ENCODE measurements at regions of chr2 and their contacts with region 1.

Region 1: DNA sequence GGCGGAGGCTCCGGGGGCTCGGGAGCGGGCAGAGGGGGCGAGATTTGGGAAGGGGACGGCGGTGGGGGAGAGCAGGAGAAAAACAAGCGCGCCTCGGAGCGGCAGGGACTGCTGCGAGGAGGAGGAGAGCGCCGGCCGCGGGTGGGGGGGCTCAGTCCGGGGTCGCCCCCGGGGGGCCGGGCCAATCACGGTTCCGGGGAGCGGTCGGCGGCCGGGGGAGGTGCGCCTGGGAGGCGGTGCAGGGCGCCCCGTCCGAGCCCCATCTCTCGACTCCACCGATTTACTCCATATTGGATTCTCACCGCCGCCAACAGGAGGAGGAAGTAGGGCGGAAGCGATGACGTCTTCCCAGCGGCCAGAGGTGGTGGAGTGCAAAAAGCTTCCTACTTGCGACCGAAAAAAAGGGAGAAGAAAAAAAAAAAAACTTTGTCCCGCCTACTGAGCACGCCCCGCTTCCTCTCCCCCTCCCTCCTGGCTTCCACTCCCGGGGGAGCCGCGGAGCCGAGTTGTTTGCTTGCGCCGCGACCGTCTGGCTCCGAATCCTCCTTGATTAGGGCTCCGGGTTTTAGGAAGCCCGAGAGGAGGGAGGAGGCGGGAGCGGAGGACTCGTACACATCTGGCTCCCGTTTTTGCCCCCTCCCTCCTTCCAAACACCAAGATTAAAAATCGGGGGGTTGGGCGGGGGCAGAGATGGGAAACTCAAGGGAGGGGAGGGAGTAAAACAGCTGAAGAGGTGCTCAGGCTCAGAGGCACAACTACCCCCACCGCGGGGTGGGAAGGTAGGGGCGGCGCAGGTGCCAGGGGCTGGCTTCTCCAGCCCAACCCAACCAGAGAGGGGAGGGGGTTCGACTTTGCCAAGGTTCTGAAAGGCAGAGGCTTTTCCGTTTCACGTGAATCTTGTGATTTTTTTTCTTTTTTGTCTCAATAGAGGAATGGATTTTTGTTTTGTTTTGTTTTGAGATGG is at the start of gene SPRED2:
- DNase-seq: peak; percentile 62
- ATAC-seq: peak; percentile 30
- H3K4me3 Mint-ChIP-seq: peak within 1 kb of the TSS; percentile 90
- H3K27ac Mint-ChIP-seq: peak within 1 kb of the TSS; percentile 69
- H3K4me1 Mint-ChIP-seq: peaks cover 23% of the 10 kb centered on the region
- H3K27me3 Mint-ChIP-seq: peaks cover 19% of the 10 kb centered on the region
- CTCF ChIP-seq: no peak
- total RNA-seq, gene SPRED2: 2.5 and 3.1 TPM in 2 replicates

Region 2: DNA sequence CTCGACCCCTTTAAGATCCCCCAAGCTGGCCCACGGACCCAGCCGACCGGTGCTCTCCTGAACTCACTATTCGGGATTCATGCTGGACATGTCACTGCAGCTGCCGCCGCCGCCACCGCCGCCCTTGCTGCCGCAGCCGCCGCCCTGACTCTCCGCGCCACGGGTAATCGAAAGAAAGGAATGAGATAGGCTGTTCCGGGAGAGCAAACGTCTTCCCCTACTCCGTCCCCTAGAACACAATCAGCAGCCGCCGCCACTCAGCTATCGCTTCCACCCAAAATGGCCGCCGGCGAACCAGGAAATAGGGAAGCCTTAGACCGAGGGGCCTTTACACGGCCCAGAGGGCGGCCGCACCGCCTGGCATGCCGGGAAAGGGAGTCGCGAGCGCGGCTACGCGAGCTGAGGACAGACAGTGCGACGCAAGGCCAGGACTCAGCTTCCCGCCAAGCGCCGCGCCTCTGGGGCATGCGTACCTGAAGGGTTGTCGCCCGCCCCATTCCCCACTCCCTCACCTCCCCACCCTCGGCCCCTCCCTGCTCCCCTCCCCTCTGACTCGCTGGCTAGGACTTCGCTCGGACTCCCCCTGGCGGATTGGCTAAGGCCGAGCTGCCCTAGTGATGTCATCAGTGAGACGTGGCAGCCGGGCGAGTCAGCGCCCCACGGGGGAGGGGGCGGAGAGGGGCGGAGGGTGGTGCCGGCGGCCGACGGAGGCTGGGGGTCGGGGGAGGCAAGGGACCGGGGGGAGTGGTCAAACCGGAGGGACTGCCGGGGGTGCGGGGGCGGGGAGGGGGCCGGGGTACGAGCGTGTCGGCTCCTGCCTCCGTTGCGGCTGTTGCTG is 302.5 kb before region 1 on chr2 and contains the start of gene RAB1A:
- CTCF ChIA-PET with region 1: no interaction called
- POLR2A ChIA-PET with region 1: interaction called, 5 read pairs
- intact Hi-C with region 1: loop called (anchors 5 kb)
- DNase-seq: peak; percentile 91
- ATAC-seq: peak; percentile 93
- H3K4me3 Mint-ChIP-seq: peak within 1 kb of the TSS; percentile 100
- H3K27ac Mint-ChIP-seq: peak within 1 kb of the TSS; percentile 100
- H3K4me1 Mint-ChIP-seq: peaks cover 49% of the 10 kb centered on the region
- H3K27me3 Mint-ChIP-seq: no peaks in the 10 kb centered on the region
- CTCF ChIP-seq: no peak
- total RNA-seq, gene RAB1A: 45.0 and 46.4 TPM in 2 replicates

Region 3: GRCh38 chr2:65264821-65265670 is 167.5 kb before region 1 on chr2:
- CTCF ChIA-PET with region 1: interaction called, 4 read pairs
- POLR2A ChIA-PET with region 1: no interaction called
- intact Hi-C with region 1: loop called (anchors 2 kb)
- DNase-seq: no peak
- ATAC-seq: peak; percentile 25
- H3K4me3 Mint-ChIP-seq: no peak overlapping the region
- H3K27ac Mint-ChIP-seq: peak overlapping the region; percentile 12
- H3K4me1 Mint-ChIP-seq: peaks cover 8% of the 10 kb centered on the region
- H3K27me3 Mint-ChIP-seq: no peaks in the 10 kb centered on the region
- CTCF ChIP-seq: no peak

Region 4: DNA sequence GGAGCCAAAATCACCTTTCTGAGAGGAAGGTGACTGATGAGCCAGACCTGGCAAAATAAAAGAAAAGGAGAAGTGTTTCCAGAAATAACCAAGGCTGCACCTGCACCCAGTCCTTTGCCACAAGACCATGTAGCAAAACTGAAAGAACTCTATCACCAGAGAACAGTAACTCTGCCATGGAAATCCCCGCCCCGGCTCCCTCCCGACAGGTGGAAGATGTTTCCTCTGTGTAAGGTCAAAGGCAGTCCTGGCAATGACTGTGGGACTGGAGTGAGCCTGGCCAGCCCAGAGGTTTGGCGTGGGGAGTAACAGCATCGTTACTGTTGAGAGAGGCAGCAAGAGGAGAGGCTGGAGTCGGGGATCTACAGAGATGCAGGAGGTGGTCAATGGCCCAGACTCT is 42.4 kb before region 1 on chr2:
- CTCF ChIA-PET with region 1: no interaction called
- POLR2A ChIA-PET with region 1: interaction called, 5 read pairs
- intact Hi-C with region 1: loop called (anchors 1 kb)
- DNase-seq: peak; percentile 42
- ATAC-seq: peak; percentile 71
- H3K4me3 Mint-ChIP-seq: peak overlapping the region; percentile 73
- H3K27ac Mint-ChIP-seq: peak overlapping the region; percentile 80
- H3K4me1 Mint-ChIP-seq: peaks cover 57% of the 10 kb centered on the region
- H3K27me3 Mint-ChIP-seq: peaks cover 10% of the 10 kb centered on the region
- CTCF ChIP-seq: no peak

Region 5: DNA sequence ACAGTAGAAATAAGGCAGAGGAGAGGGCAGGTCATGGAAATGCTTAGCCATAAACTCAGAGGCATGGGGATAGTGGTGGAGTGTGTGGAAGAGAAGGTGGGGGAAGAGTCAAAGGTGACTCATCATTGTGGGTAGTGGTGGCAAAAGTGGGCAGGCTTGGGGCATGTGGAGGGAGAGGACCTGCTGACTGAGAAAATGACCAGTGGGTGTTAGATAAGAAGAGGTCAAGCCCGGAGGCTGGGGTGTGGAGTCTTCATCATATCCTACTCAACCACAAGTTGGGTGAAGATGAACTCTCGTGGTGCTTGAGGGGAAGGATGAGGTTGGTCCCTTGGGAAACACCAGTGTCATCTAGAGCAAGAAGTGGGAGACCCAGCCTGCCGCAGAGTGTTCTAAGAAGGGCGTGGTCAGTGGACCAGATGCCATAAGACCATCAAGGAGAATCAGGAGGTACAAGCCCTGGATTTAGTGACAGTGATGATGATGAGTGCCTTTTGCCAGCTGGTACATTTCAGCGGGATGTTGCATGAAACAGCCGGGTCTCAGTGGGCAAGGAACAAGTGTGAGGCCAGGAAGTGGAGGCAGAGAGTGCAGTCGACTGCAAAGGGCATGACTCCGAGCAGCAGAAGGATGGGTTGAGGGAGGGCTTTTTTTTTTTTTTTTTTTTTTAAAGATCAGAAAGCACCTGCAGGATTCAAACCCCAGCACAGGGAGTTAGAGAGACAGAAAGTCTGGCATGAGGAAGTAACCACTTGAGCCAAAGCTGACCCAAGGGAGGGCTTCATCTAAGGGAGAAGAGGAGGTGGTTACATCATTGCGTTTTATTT is 122.5 kb after region 1 on chr2:
- CTCF ChIA-PET with region 1: interaction called, 3 read pairs
- POLR2A ChIA-PET with region 1: no interaction called
- intact Hi-C with region 1: loop called (anchors 5 kb)
- DNase-seq: no peak
- ATAC-seq: peak; percentile 63
- H3K4me3 Mint-ChIP-seq: peak overlapping the region; percentile 42
- H3K27ac Mint-ChIP-seq: no peak overlapping the region
- H3K4me1 Mint-ChIP-seq: peaks cover 27% of the 10 kb centered on the region
- H3K27me3 Mint-ChIP-seq: peaks cover 3% of the 10 kb centered on the region
- CTCF ChIP-seq: no peak

Region 6: GRCh38 chr2:65800998-65801397 is 368.5 kb after region 1 on chr2:
- CTCF ChIA-PET with region 1: no interaction called
- POLR2A ChIA-PET with region 1: no interaction called
- intact Hi-C with region 1: no loop called
- DNase-seq: no peak
- ATAC-seq: no peak
- H3K4me3 Mint-ChIP-seq: no peak overlapping the region
- H3K27ac Mint-ChIP-seq: no peak overlapping the region
- H3K4me1 Mint-ChIP-seq: no peaks in the 10 kb centered on the region
- H3K27me3 Mint-ChIP-seq: peaks cover 10% of the 10 kb centered on the region
- CTCF ChIP-seq: no peak

Region 7: DNA sequence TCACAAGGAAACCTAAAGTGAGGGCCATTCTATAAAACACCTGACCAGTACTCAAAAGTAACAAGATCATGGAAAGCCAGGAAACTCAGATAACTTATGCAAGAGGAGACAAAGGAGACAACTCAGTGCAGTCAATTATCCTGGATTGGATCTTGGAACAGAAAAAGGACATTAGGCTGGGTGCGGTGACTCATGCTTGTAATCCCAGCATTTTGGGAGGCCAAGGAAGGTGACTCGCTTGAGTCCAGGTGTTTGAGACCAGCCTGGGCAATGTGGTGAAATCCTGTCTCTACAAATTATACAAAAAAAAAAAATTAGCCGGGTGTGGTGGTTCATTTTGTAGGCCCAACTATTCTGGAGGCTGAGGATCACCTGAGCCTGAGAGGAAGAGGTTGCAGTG is 424.4 kb after region 1 on chr2:
- CTCF ChIA-PET with region 1: no interaction called
- POLR2A ChIA-PET with region 1: no interaction called
- intact Hi-C with region 1: no loop called
- DNase-seq: no peak
- ATAC-seq: no peak
- H3K4me3 Mint-ChIP-seq: no peak overlapping the region
- H3K27ac Mint-ChIP-seq: no peak overlapping the region
- H3K4me1 Mint-ChIP-seq: no peaks in the 10 kb centered on the region
- H3K27me3 Mint-ChIP-seq: no peaks in the 10 kb centered on the region
- CTCF ChIP-seq: no peak

Region 8: DNA sequence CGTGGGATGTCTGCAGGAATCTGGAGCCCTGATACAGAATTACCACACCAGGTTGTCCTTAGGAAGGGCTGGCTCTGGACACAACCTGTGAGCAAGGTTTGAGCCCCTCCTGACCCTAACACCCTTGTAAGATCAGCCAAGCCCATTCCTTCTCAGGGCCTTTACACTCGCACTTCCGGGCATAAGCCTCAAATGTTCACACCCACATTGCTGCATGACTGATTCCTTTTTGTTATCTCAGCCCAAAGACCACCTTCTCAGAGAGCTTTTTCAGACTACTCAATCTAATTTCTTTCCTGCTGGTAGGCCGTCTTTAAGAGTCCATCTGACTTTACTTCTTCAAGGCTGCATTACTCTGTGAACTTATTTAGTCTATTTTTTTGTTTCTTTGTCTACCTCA is 463.9 kb after region 1 on chr2:
- CTCF ChIA-PET with region 1: no interaction called
- POLR2A ChIA-PET with region 1: no interaction called
- intact Hi-C with region 1: no loop called
- DNase-seq: no peak
- ATAC-seq: no peak
- H3K4me3 Mint-ChIP-seq: no peak overlapping the region
- H3K27ac Mint-ChIP-seq: no peak overlapping the region
- H3K4me1 Mint-ChIP-seq: no peaks in the 10 kb centered on the region
- H3K27me3 Mint-ChIP-seq: peaks cover 3% of the 10 kb centered on the region
- CTCF ChIP-seq: no peak

Region 9: GRCh38 chr2:65974067-65974723 is 541.7 kb after region 1 on chr2:
- CTCF ChIA-PET with region 1: no interaction called
- POLR2A ChIA-PET with region 1: no interaction called
- intact Hi-C with region 1: no loop called
- DNase-seq: no peak
- ATAC-seq: no peak
- H3K4me3 Mint-ChIP-seq: no peak overlapping the region
- H3K27ac Mint-ChIP-seq: no peak overlapping the region
- H3K4me1 Mint-ChIP-seq: no peaks in the 10 kb centered on the region
- H3K27me3 Mint-ChIP-seq: no peaks in the 10 kb centered on the region
- CTCF ChIP-seq: no peak